ENCODE measurements at regions of chr7 and their contacts with region 1.

Region 1: DNA sequence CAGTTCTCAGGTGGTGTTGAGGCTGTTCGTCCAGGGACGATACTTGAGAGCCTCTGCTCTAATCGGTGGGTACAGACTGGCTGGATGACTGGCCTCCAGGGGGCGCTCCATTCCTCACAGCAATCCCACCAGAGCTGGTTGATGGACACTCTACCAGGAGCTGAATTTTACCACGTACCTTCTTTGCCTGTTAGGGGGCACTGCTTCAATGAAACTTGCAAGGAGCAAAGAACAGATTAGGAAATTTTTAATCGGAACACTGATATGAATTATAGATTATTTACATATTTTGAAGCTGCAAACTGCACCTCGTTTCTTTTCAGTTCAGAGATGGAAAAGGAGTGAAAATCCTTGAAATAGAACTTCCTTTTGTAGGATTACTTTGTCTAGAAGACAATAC is 44.9 kb downstream of the KBTBD2 start:
- DNase-seq: peak; percentile 51
- ATAC-seq: peak; percentile 100
- H3K4me3 ChIP-seq: no peak overlapping the region
- H3K27ac ChIP-seq: no peak overlapping the region
- H3K4me1 ChIP-seq: no peaks in the 10 kb centered on the region; the same call in 1 of the 2 replicates
- H3K27me3 ChIP-seq: no peaks in the 10 kb centered on the region
- CTCF ChIP-seq: peak; percentile 77 to 84 (median 81)
- EP300 ChIP-seq: no peak
- POLR2A ChIP-seq: no peak
- RAD21 ChIP-seq: peak; percentile 55

Region 2: GRCh38 chr7:32803406-32804141 is 43.1 kb before region 1 on chr7:
- CTCF ChIA-PET with region 1: interaction called, 10 read pairs
- POLR2A ChIA-PET with region 1: no interaction called
- RAD21 ChIA-PET with region 1: interaction called, 7 read pairs
- SMC1A ChIA-PET with region 1: interaction called, 3 read pairs
- in situ Hi-C with region 1: no loop called
- intact Hi-C with region 1: no loop called
- DNase-seq: no peak
- ATAC-seq: no peak
- H3K4me3 ChIP-seq: no peak overlapping the region
- H3K27ac ChIP-seq: no peak overlapping the region
- H3K4me1 ChIP-seq: no peaks in the 10 kb centered on the region
- H3K27me3 ChIP-seq: no peaks in the 10 kb centered on the region
- CTCF ChIP-seq: no peak
- EP300 ChIP-seq: no peak
- POLR2A ChIP-seq: no peak
- RAD21 ChIP-seq: no peak

Region 3: DNA sequence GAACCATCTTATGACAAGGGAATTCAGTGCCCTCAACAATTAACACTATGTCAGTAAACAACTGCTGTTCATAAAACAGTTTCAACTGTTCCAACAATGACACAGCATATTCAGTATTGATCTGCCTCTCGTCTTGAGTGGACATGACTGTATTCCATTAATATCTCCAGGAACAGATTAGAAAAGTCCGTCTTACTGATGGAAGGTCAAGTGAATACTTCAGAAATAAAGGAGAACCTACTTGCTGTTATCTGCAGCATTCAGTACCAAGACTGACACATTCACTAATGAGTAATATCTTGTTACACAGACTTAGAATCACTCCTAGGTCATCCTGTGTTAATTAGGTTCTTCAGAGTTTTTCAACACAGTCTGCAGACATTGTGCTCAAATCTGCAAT is 32.8 kb after region 1 on chr7:
- CTCF ChIA-PET with region 1: interaction called, 20 read pairs
- POLR2A ChIA-PET with region 1: no interaction called
- RAD21 ChIA-PET with region 1: interaction called, 6 read pairs
- SMC1A ChIA-PET with region 1: interaction called, 7 read pairs
- in situ Hi-C with region 1: no loop called
- intact Hi-C with region 1: no loop called
- DNase-seq: no peak
- ATAC-seq: peak; percentile 71
- H3K4me3 ChIP-seq: no peak overlapping the region
- H3K27ac ChIP-seq: peak overlapping the region; percentile 42; the same call in 1 of the 2 replicates
- H3K4me1 ChIP-seq: no peaks in the 10 kb centered on the region
- H3K27me3 ChIP-seq: no peaks in the 10 kb centered on the region
- CTCF ChIP-seq: no peak
- EP300 ChIP-seq: no peak
- POLR2A ChIP-seq: no peak
- RAD21 ChIP-seq: no peak

Region 4: GRCh38 chr7:32942786-32943653 is 96.3 kb after region 1 on chr7:
- CTCF ChIA-PET with region 1: interaction called, 18 read pairs
- POLR2A ChIA-PET with region 1: no interaction called
- RAD21 ChIA-PET with region 1: interaction called, 34 read pairs
- SMC1A ChIA-PET with region 1: interaction called, 19 read pairs
- in situ Hi-C with region 1: no loop called
- intact Hi-C with region 1: loop called (anchors 2 kb)
- DNase-seq: no peak
- ATAC-seq: peak; percentile 96
- H3K4me3 ChIP-seq: peak overlapping the region; percentile 86
- H3K27ac ChIP-seq: peak overlapping the region; percentile 46; the same call in 1 of the 2 replicates
- H3K4me1 ChIP-seq: no peaks in the 10 kb centered on the region; the same call in none of the 2 replicates
- H3K27me3 ChIP-seq: no peaks in the 10 kb centered on the region; a peak in 1 of 4 replicates
- CTCF ChIP-seq: peak; percentile 56 to 78 (median 64); a peak in 5 of 6 replicates
- EP300 ChIP-seq: no peak
- POLR2A ChIP-seq: peak; percentile 42
- RAD21 ChIP-seq: peak; percentile 78

Region 5: DNA sequence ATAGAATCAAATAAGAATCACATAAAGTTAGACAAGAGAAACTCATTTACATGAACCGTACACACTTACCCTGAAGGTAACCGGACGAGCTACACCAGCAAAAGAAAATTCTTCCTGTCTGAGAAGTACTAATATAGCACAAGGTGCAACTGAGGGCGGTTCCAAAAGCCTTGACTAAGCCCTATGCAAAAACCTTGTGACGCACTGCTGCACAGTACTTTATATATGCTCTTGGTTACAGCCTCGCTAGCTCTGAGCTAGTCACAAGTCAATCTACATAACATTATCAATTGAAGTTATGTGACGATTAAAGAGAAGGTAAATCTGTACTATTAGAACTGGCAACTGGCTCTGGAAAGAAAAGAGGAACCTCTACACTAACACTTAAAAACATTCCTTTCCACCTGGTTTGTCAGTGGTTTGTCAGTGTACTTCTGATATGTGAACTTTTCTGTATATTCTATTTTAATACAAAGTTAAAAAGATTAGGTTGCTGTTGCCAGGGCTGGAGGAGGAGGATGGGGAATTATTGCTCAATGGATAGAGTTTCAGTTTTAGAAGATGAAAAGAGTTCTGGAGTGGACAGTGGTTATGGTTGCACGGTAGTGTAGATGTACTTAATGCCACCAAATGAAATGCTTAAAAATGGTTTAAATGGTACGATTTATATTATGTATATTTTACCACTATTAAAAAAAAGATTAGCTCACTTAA is 194.3 kb after region 1 on chr7:
- CTCF ChIA-PET with region 1: interaction called, 14 read pairs
- POLR2A ChIA-PET with region 1: no interaction called
- RAD21 ChIA-PET with region 1: interaction called, 7 read pairs
- SMC1A ChIA-PET with region 1: interaction called, 7 read pairs
- in situ Hi-C with region 1: no loop called
- intact Hi-C with region 1: no loop called
- DNase-seq: peak; percentile 89
- ATAC-seq: peak; percentile 93
- H3K4me3 ChIP-seq: peak overlapping the region; percentile 77
- H3K27ac ChIP-seq: peak overlapping the region; percentile 71; the same call in 1 of the 2 replicates
- H3K4me1 ChIP-seq: peaks cover 5% of the 10 kb centered on the region; the same call in 1 of the 2 replicates
- H3K27me3 ChIP-seq: no peaks in the 10 kb centered on the region
- CTCF ChIP-seq: no peak
- EP300 ChIP-seq: 0 out of 4 replicates have a peak, but pooled peaks of 1 of the 2 experiments have one; percentile 15
- POLR2A ChIP-seq: peak; percentile 88
- RAD21 ChIP-seq: no peak

Region 6: GRCh38 chr7:33109005-33109757 is 262.5 kb after region 1 on chr7 and contains the start of gene RP9:
- CTCF ChIA-PET with region 1: interaction called, 95 read pairs
- POLR2A ChIA-PET with region 1: interaction called, 4 read pairs
- RAD21 ChIA-PET with region 1: interaction called, 30 read pairs
- SMC1A ChIA-PET with region 1: interaction called, 51 read pairs
- in situ Hi-C with region 1: no loop called
- intact Hi-C with region 1: loop called (anchors 1 kb)
- DNase-seq: no peak
- ATAC-seq: peak; percentile 89
- H3K4me3 ChIP-seq: peak within 1 kb of the TSS; percentile 96
- H3K27ac ChIP-seq: peak within 1 kb of the TSS; percentile 45
- H3K4me1 ChIP-seq: peaks cover 11% of the 10 kb centered on the region; the same call in 1 of the 2 replicates
- H3K27me3 ChIP-seq: no peaks in the 10 kb centered on the region; a peak in 1 of 4 replicates
- CTCF ChIP-seq: peak; percentile 36 to 65 (median 52); a peak in 4 of 6 replicates
- EP300 ChIP-seq: no peak
- POLR2A ChIP-seq: peak; percentile 89
- RAD21 ChIP-seq: peak; percentile 34
- polyA plus RNA-seq, gene RP9: 7.6 to 9.6 TPM